Activated T-helper 1 cell treated with anti-CD3 and anti-CD28 coated beads, Interleukin-12 subunit alpha, Interleukin-12 subunit beta, Interleukin-2, Interleukin-4 antibody, amounts not matched to agents 30 ng/mL and 10 ng/mL and 1 ng/mL, durations not matched to agents 14 hours and 24 hours and 36 hours (primary cell): ENCODE measurements at regions of chr16 and their contacts with region 1.

Region 1: DNA sequence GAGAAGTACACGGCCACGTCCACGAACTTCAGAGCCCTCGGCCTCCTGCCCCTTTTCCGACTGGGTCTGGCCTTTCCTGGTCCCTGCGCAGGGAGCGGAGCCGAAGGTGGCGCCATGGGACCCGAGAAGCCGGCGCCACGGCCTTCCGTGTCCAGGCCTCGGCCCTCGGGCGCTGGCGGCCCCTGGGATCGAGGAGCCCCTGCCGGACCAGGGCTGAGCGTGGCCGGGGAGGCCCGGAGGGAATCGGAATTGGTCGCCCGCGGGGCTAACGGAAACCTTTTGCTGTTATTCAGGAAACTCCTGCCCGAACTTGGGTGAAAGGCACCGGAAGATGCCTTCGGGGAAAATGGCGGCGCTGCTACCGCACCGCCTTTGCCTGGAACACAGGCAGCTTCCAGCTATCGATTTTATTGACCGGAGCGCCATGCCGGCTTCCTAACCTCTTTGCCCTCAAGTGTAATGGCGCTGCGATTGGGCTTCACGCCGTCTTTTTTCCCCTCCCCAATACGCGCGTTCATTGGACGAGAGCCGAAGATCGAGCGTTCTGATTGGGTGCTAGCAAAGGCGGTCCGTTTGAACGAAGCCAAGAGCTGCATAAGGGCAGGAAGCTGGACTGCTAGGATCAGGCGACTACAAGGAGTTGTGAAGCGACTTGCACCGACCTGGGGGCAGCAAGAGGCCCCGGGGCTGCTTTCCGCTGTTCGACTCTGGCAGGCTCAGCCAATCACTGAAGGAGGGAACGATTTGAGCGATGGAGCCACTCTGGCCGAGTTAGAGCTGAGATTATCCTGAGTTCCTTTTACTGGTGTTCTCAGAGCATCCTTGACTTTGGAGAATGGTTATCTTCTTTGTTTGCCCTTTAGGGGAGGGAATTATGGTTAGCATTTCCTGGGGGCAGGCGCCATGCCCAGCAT is at the start of gene ZNF689:
- DNase-seq: peak; percentile 95
- H3K4me3 Mint-ChIP-seq: peak within 1 kb of the TSS; percentile 93
- H3K27ac Mint-ChIP-seq: peak within 1 kb of the TSS; percentile 96
- H3K4me1 Mint-ChIP-seq: peaks cover 19% of the 10 kb centered on the region
- H3K27me3 Mint-ChIP-seq: no peaks in the 10 kb centered on the region
- total RNA-seq, gene ZNF689: 14.7 TPM in 2 replicates

Region 2: DNA sequence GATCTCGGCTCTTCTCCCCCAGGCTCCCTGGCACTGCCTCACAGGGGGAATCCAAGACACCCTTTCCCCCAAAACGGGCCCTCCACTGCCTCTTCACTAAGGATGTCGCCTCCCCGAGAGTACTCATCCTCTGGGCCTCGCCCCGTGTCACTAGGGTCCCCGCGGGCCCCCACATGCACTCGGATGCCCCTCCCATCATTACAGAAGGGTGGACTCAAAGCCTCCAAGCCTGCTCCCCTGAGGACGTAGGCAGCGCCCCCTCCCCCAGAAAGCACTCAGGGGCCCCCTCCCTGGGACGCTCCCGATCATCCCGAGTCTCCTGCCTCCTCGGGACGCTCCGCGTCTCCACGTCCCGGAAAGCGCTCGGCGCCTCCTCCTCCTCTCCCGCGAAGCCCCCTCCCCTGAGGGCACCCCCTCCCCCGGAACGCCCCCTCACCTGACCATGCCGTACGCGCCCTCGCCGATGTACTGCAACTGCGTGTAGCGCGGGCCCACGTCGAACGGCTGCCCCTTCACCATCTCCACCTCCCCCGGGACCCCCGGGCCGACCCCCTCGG is 487.5 kb before region 1 on chr16:
- intact Hi-C with region 1: loop called (anchors 1 kb)
- DNase-seq: peak; percentile 6
- H3K4me3 Mint-ChIP-seq: peak overlapping the region; percentile 90
- H3K27ac Mint-ChIP-seq: peak overlapping the region; percentile 91
- H3K4me1 Mint-ChIP-seq: peaks cover 32% of the 10 kb centered on the region
- H3K27me3 Mint-ChIP-seq: no peaks in the 10 kb centered on the region

Region 3: GRCh38 chr16:30557957-30558788 is 52.0 kb before region 1 on chr16 and contains the start of gene ZNF764:
- intact Hi-C with region 1: loop called (anchors 1 kb)
- DNase-seq: peak; percentile 97
- H3K4me3 Mint-ChIP-seq: peak within 1 kb of the TSS; percentile 90
- H3K27ac Mint-ChIP-seq: peak within 1 kb of the TSS; percentile 92
- H3K4me1 Mint-ChIP-seq: peaks cover 42% of the 10 kb centered on the region
- H3K27me3 Mint-ChIP-seq: no peaks in the 10 kb centered on the region
- total RNA-seq, gene ZNF764: 17.9 and 21.2 TPM in 2 replicates

Region 4: DNA sequence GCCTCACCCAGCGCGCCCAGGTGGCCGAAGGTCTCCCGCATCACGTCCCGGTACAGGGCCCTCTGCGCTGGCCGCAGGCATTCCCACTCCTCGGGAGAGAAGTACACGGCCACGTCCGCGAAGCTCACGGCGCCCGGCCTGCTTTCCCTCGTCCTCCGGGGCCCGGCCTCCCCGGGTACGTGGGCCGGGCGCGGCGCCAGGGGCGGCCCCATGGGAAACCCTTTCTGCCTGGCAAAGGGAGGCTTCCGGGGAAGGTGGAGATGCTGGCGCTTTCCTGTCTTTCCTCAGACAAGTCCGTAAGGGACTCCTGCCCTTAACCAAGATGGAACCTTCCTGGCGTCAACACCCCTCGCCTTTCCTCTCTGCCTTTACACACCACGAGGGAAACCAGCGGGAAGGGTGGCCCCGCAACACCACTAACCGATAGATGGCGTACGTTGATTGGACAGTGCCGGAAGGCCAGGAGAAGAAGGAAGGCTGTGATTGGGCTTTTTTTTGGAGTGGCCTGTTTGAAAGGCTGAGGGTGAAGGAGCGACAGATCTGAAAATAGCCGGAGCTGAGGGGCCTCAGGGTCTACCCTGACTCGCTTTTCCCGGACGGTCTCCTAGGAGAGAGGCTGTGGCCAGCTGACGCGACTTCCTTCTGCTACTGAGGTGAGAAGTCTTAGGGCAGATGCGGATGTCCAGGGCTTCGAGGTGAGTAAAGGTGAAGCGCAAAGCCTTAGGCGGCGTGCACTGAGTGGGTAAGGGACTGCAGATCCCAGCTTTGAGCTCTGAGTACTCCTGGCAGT is 24.6 kb before region 1 on chr16 and contains the start of gene ZNF785:
- intact Hi-C with region 1: loop called (anchors 1 kb)
- DNase-seq: peak; percentile 93
- H3K4me3 Mint-ChIP-seq: peak within 1 kb of the TSS; percentile 89
- H3K27ac Mint-ChIP-seq: peak within 1 kb of the TSS; percentile 87
- H3K4me1 Mint-ChIP-seq: peaks cover 18% of the 10 kb centered on the region
- H3K27me3 Mint-ChIP-seq: no peaks in the 10 kb centered on the region
- total RNA-seq, gene ZNF785: 19.2 and 21.5 TPM in 2 replicates

Region 5: GRCh38 chr16:30628627-30629540 is 18.7 kb after region 1 on chr16:
- intact Hi-C with region 1: loop called (anchors 1 kb)
- DNase-seq: peak; percentile 77
- H3K4me3 Mint-ChIP-seq: peak overlapping the region; percentile 52
- H3K27ac Mint-ChIP-seq: peak overlapping the region; percentile 71
- H3K4me1 Mint-ChIP-seq: peaks cover 10% of the 10 kb centered on the region
- H3K27me3 Mint-ChIP-seq: no peaks in the 10 kb centered on the region

Region 6: DNA sequence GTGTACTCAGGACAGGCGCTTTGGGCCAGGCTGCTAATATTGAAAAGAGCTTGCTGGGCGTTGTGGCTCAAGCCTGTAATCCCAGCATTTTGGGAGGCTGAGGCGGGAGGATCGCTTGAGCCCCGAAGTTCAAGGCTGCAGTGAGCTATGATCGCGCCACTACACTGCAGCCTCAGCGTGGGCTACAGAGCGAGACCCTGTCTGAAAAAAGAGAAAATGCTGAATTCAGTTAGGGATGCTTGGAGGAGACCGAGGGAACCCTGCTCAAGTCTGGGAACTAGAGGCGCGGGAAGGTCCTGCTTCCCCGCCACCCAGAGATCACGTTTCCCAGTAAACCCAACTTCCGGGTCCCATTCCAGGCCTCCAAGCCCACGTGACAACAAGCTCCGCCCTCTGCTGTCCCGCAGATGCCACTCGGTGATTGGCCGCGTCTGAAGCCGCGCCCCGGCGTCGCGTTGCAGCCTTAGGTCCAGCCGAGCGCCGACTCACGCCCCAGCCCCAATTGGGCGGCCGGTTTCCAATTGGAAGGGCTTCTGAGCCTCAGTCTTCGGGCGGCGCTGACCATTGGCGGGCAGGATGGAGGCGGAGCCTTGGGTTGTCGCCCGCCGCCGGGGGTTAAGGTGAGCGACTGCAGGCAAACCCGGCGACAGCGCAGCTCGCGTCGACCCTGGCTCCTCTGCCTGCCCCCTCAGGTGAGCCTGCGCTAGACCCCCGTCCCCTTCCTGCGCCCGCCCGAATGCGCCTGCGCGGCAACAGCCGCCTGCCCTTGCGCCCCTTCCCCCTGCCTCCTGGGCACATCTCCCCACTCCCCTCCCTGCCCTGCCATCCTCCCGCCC is 137.8 kb after region 1 on chr16 and contains the start of gene PHKG2:
- intact Hi-C with region 1: no loop called
- DNase-seq: peak; percentile 97
- H3K4me3 Mint-ChIP-seq: peak within 1 kb of the TSS; percentile 93
- H3K27ac Mint-ChIP-seq: peak within 1 kb of the TSS; percentile 83
- H3K4me1 Mint-ChIP-seq: peaks cover 19% of the 10 kb centered on the region
- H3K27me3 Mint-ChIP-seq: no peaks in the 10 kb centered on the region
- total RNA-seq, gene PHKG2: 42.4 and 43.6 TPM in 2 replicates